Activated naive CD8-positive, alpha-beta T cell treated with anti-CD3 and anti-CD28 coated beads, Interleukin-2, amount 10 ng/mL, durations not matched to agents 7 days and 5 days (primary cell): ENCODE measurements at regions of chr15 and their contacts with region 1.

Region 1: GRCh38 chr15:44738340-44738984 is 2.1 kb downstream of the TRIM69 start:
- DNase-seq: no peak
- ATAC-seq: no peak
- H3K4me3 Mint-ChIP-seq: peak overlapping the region; percentile 73
- H3K27ac Mint-ChIP-seq: peak overlapping the region; percentile 51
- H3K4me1 Mint-ChIP-seq: peaks cover 38% of the 10 kb centered on the region
- H3K27me3 Mint-ChIP-seq: no peaks in the 10 kb centered on the region

Region 2: DNA sequence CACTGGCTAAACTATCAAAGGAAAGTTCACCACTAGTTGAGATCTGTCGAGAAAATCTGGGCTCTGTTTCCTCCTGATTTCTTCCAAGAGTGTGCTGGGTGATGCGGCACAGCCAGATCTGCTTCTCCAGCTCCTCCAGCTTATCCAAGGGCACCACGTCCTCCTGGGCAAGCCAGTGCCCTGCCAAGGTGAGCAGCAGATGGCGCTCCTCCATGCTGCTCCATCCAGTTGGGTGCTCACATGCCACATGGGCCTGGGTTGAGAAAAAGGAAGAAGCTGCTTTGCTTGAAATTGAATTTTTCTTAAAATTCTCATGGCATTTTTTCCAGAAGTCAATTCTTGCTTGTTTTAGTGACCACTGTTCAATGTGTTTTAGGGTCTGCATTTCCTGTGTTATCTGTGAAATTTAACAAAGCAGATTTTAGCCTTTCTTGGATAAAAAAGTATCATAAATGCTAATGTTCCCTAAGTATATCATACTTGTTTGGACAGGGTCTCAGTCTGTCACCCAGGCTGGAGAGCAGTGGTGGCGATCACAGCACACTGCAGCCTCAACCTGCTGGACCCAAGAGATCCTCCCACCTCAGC is 154.2 kb before region 1 on chr15:
- POLR2A ChIA-PET with region 1: interaction called, 23 read pairs
- DNase-seq: peak; percentile 57
- ATAC-seq: peak; percentile 80
- H3K4me3 Mint-ChIP-seq: no peak overlapping the region
- H3K27ac Mint-ChIP-seq: no peak overlapping the region
- H3K4me1 Mint-ChIP-seq: peaks cover 3% of the 10 kb centered on the region
- H3K27me3 Mint-ChIP-seq: no peaks in the 10 kb centered on the region

Region 3: GRCh38 chr15:44598892-44599291 is 139.6 kb before region 1 on chr15:
- POLR2A ChIA-PET with region 1: interaction called, 14 read pairs
- DNase-seq: no peak
- ATAC-seq: no peak
- H3K4me3 Mint-ChIP-seq: no peak overlapping the region
- H3K27ac Mint-ChIP-seq: peak overlapping the region; percentile 21
- H3K4me1 Mint-ChIP-seq: peaks cover 27% of the 10 kb centered on the region
- H3K27me3 Mint-ChIP-seq: no peaks in the 10 kb centered on the region

Region 4: DNA sequence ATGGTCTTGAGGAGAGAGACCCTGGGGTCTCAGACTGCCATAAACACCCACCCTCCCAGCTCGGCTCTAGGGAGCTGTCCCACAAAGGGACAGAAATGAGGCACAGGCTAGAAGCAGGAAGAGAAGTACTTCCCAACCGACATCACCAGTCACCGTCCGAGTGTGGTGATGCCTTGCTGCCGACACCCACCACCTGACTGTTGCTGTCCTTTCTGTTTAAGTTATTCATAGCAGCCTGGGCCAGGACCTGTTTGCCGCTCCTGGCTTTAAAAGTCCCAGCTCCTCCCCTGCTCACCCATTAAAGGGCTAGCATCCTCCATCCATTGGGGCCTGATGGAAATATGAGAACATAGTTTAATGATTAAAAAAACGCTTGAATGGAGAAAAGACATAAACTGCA is 61.8 kb before region 1 on chr15:
- POLR2A ChIA-PET with region 1: interaction called, 622 read pairs
- DNase-seq: no peak
- ATAC-seq: peak; percentile 45
- H3K4me3 Mint-ChIP-seq: peak overlapping the region; percentile 73
- H3K27ac Mint-ChIP-seq: peak overlapping the region; percentile 85
- H3K4me1 Mint-ChIP-seq: peaks cover 61% of the 10 kb centered on the region
- H3K27me3 Mint-ChIP-seq: no peaks in the 10 kb centered on the region